Natural killer cell (primary cell): ENCODE measurements at regions of chr2 and their contacts with region 1.

Region 1: DNA sequence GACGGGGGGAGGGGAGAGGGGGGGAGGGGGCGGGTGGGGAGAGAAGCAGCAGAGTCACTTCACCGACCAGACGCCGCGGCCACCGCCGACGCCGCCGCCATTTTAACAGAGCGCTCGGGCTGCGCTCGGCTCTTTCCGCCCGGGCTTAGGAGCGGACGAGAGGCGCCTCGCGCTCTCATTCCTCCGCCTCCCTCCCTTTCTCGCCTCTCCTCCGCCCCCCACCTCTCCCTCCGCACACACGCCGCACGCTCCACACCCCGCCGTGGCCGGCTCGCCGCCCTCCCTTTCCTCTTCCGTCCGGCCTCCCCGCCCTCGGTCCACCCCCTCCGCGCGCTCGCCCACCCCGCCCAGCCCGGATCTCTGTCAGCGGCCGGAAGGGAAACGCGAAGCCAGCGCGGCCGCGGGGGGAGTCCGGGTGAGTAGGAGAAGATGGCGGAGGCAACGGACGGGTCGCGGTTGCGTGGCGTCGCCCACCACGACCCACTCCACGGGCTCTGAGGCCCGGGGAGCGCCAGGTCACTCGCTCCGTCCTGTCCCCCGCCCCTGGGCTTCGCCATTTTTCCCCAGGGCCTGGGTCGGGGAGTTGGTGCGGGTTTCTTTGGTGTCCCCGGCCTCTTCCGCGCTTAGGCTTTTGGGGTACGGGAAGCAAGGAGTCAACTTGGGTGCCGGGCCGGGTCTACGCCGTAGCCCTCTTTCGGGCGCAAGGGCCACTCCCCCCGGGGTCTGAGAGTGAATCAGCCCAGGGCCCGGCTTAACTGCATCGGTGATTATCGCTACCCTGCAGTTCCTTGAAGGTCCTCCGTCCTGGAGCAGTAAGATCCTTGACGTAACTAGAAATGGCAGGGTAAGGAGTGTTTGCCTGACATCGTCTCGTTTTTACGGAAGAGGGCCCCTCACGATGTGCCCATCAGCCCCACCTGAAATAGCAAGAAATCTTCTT is at the start of gene USP34:
- DNase-seq: peak; percentile 85 to 97
- ATAC-seq: peak; percentile 85 to 97 (median 89)
- H3K4me3 ChIP-seq: peak within 1 kb of the TSS; percentile 98
- H3K4me3 Mint-ChIP-seq: peak within 1 kb of the TSS; percentile 96
- H3K27ac ChIP-seq: peak within 1 kb of the TSS; percentile 99
- H3K27ac Mint-ChIP-seq: peak within 1 kb of the TSS; percentile 91 to 95
- H3K4me1 ChIP-seq: peaks cover 27% of the 10 kb centered on the region
- H3K4me1 Mint-ChIP-seq: peaks cover 29 to 31% of the 10 kb centered on the region in 2 donors
- H3K27me3 ChIP-seq: no peaks in the 10 kb centered on the region
- H3K27me3 Mint-ChIP-seq: no peaks in the 10 kb centered on the region
- CTCF ChIP-seq: no peak
- total RNA-seq, gene USP34: 184 to 204 (median 199) TPM

Region 2: GRCh38 chr2:61426267-61426897 is 44.9 kb before region 1 on chr2:
- intact Hi-C with region 1: loop called (anchors 1 kb)
- DNase-seq: peak; percentile 71 to 87
- ATAC-seq: peak; percentile 90 to 95 (median 94)
- H3K4me3 ChIP-seq: no peak overlapping the region
- H3K4me3 Mint-ChIP-seq: no peak overlapping the region
- H3K27ac ChIP-seq: peak overlapping the region; percentile 76
- H3K27ac Mint-ChIP-seq: peak overlapping the region; percentile 74 to 88
- H3K4me1 ChIP-seq: peaks cover 32% of the 10 kb centered on the region
- H3K4me1 Mint-ChIP-seq: peaks cover 59 to 61% of the 10 kb centered on the region in 2 donors
- H3K27me3 ChIP-seq: no peaks in the 10 kb centered on the region
- H3K27me3 Mint-ChIP-seq: no peaks in the 10 kb centered on the region
- CTCF ChIP-seq: peak; percentile 74

Region 3: GRCh38 chr2:61450144-61450543 is 21.1 kb before region 1 on chr2:
- intact Hi-C with region 1: loop called (anchors 1 kb)
- DNase-seq: peak in 1 of 2 donors; percentile 42
- ATAC-seq: peak; percentile 87 to 94 (median 90)
- H3K4me3 ChIP-seq: no peak overlapping the region
- H3K4me3 Mint-ChIP-seq: peak overlapping the region; percentile 59
- H3K27ac ChIP-seq: no peak overlapping the region
- H3K27ac Mint-ChIP-seq: peak overlapping the region; percentile 13 to 60
- H3K4me1 ChIP-seq: peaks cover 34% of the 10 kb centered on the region
- H3K4me1 Mint-ChIP-seq: peaks cover 35 to 47% of the 10 kb centered on the region in 2 donors
- H3K27me3 ChIP-seq: no peaks in the 10 kb centered on the region
- H3K27me3 Mint-ChIP-seq: no peaks in the 10 kb centered on the region
- CTCF ChIP-seq: no peak

Region 4: GRCh38 chr2:61857224-61857623 is 386.0 kb after region 1 on chr2:
- intact Hi-C with region 1: no loop called
- DNase-seq: peak in 1 of 2 donors; percentile 34
- ATAC-seq: no peak
- H3K4me3 ChIP-seq: no peak overlapping the region
- H3K4me3 Mint-ChIP-seq: peak overlapping the region; percentile 6
- H3K27ac ChIP-seq: no peak overlapping the region
- H3K27ac Mint-ChIP-seq: no peak overlapping the region
- H3K4me1 ChIP-seq: peaks cover 17% of the 10 kb centered on the region
- H3K4me1 Mint-ChIP-seq: peaks cover 18 to 25% of the 10 kb centered on the region in 2 donors
- H3K27me3 ChIP-seq: no peaks in the 10 kb centered on the region
- H3K27me3 Mint-ChIP-seq: no peaks in the 10 kb centered on the region
- CTCF ChIP-seq: no peak